Ascending aorta (tissue), 2 donors: ENCODE measurements at regions of chr17 and their contacts with region 1.

Region 1: GRCh38 chr17:77734341-77735080 is 224.0 kb upstream of the TNRC6C start:
- DNase-seq: peak; percentile 45 to 94
- H3K4me3 ChIP-seq: peak overlapping the region in 1 of 2 donors; percentile 47
- H3K27ac ChIP-seq: peak overlapping the region; percentile 85 to 87
- H3K4me1 ChIP-seq: peaks cover 21 to 44% of the 10 kb centered on the region in 2 donors
- H3K27me3 ChIP-seq: no peaks in the 10 kb centered on the region
- CTCF ChIP-seq: peak in 1 of 3 experiments; percentile 29

Region 2: GRCh38 chr17:77391668-77392375 is 342.7 kb before region 1 on chr17:
- intact Hi-C with region 1: no loop called
- DNase-seq: peak in 1 of 2 donors; percentile 88
- H3K4me3 ChIP-seq: peak overlapping the region in 1 of 2 donors; percentile 4
- H3K27ac ChIP-seq: peak overlapping the region; percentile 70 to 78
- H3K4me1 ChIP-seq: peaks cover 27 to 58% of the 10 kb centered on the region in 2 donors
- H3K27me3 ChIP-seq: no peaks in the 10 kb centered on the region
- CTCF ChIP-seq: no peak

Region 3: GRCh38 chr17:77786740-77787505 is 52.4 kb after region 1 on chr17:
- intact Hi-C with region 1: no loop called
- DNase-seq: no peak
- H3K4me3 ChIP-seq: no peak overlapping the region
- H3K27ac ChIP-seq: no peak overlapping the region
- H3K4me1 ChIP-seq: peaks cover 0 to 4% of the 10 kb centered on the region in 2 donors
- H3K27me3 ChIP-seq: no peaks in the 10 kb centered on the region
- CTCF ChIP-seq: no peak

Region 4: DNA sequence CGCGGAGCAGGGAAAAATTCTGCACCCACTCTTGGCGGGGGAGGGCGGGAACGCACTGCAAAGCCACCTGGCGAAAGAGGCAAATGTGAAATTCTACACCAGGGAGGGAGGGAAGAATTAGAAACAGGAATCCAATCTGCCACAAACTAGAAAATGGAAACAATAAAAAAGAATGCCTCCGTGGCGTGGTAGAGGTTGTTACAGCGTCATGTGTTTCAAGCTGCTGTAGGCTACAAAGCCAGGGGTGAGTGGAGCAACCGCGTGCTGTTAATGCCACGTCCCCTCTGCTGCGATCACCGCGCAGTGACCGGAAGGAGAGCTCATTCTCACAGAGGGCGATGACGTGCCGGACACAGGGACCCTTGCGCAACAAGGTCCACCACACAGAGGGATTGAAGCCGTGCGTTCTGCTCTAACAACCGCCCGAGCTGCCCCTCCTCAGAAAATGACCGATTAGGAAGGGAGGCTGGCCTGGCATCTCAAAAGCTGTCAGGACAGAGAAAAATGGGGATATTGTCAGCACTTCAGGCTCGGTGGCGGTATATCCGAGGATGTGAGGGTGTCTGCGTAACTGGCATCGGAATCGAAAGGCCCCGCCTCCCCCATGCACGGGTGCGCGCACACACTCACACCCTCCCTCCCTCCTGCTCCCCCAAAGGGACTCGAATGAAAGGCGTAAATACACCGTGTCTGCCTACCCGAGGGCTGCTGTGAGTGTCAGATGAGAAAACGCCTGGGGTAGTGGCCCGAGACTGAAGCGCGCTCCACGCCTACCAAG is 153.1 kb after region 1 on chr17:
- intact Hi-C with region 1: loop called (anchors 5 kb)
- DNase-seq: peak; percentile 80 to 97
- H3K4me3 ChIP-seq: peak overlapping the region; percentile 54 to 68
- H3K27ac ChIP-seq: peak overlapping the region; percentile 80 to 84
- H3K4me1 ChIP-seq: peaks cover 0 to 12% of the 10 kb centered on the region in 2 donors
- H3K27me3 ChIP-seq: no peaks in the 10 kb centered on the region
- CTCF ChIP-seq: no peak

Region 5: GRCh38 chr17:78568494-78569115 is 834.1 kb after region 1 on chr17:
- intact Hi-C with region 1: no loop called
- DNase-seq: no peak
- H3K4me3 ChIP-seq: no peak overlapping the region
- H3K27ac ChIP-seq: no peak overlapping the region
- H3K4me1 ChIP-seq: no peaks in the 10 kb centered on the region
- H3K27me3 ChIP-seq: no peaks in the 10 kb centered on the region
- CTCF ChIP-seq: no peak